Activated CD4-positive, alpha-beta T cell treated with anti-CD3 and anti-CD28 coated beads for 36 hours (primary cell): ENCODE measurements at regions of chr18 and their contacts with region 1.

Region 1: DNA sequence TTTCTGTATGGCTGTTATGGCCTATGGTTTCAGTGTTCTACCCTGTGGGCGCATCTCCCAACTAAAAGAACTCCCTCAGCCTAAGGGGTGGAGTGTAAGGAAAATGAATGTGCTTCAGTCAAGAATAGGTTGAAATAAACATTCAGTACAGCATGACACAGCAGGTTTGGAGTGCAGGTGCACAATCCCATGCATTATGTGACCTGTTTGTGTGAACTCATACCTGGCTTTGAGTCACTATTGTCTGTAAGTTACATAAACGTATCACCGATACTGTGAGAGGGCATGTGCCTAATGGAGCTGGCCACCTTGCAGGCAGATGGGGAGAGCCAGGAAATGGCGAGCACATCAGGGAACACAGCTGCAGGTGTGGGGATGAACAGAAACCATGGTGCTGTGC is 216.0 kb downstream of the DSEL start:
- DNase-seq: peak; percentile 45
- ATAC-seq: no peak
- H3K4me3 Mint-ChIP-seq: no peak overlapping the region
- H3K27ac Mint-ChIP-seq: no peak overlapping the region
- H3K4me1 Mint-ChIP-seq: peaks cover 6% of the 10 kb centered on the region
- H3K27me3 Mint-ChIP-seq: no peaks in the 10 kb centered on the region

Region 2: GRCh38 chr18:67239826-67240225 is 60.7 kb before region 1 on chr18:
- CTCF ChIA-PET with region 1: no interaction called
- POLR2A ChIA-PET with region 1: no interaction called
- intact Hi-C with region 1: no loop called
- DNase-seq: peak; percentile 22
- ATAC-seq: peak; percentile 44
- H3K4me3 Mint-ChIP-seq: no peak overlapping the region
- H3K27ac Mint-ChIP-seq: no peak overlapping the region
- H3K4me1 Mint-ChIP-seq: peaks cover 23% of the 10 kb centered on the region
- H3K27me3 Mint-ChIP-seq: no peaks in the 10 kb centered on the region

Region 3: GRCh38 chr18:67250776-67251424 is 49.6 kb before region 1 on chr18:
- CTCF ChIA-PET with region 1: no interaction called
- POLR2A ChIA-PET with region 1: no interaction called
- intact Hi-C with region 1: no loop called
- DNase-seq: no peak
- ATAC-seq: no peak
- H3K4me3 Mint-ChIP-seq: no peak overlapping the region
- H3K27ac Mint-ChIP-seq: no peak overlapping the region
- H3K4me1 Mint-ChIP-seq: no peaks in the 10 kb centered on the region
- H3K27me3 Mint-ChIP-seq: no peaks in the 10 kb centered on the region

Region 4: DNA sequence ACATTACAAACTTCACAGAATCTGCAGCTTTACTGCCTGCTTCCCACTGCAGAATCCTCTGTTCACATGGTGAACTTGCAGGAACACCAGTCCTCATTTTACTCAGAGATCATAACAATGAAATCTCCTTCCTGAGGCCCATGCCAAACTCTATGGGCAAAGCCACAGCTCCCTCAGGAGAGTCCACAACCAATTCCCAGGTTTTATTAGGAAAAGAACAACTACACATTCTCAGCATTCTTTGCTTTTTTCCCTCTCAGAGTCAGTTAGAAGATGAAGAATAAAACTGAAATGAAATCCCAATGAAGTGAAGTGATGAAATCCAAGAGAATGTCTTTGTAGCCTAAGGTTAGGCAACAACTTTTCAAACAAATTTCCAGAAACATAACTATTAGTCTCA is 17.7 kb before region 1 on chr18:
- CTCF ChIA-PET with region 1: interaction called, 3 read pairs
- POLR2A ChIA-PET with region 1: no interaction called
- intact Hi-C with region 1: loop called in 1 of 2 experiments (anchors 2 kb)
- DNase-seq: no peak
- ATAC-seq: no peak
- H3K4me3 Mint-ChIP-seq: no peak overlapping the region
- H3K27ac Mint-ChIP-seq: no peak overlapping the region
- H3K4me1 Mint-ChIP-seq: no peaks in the 10 kb centered on the region
- H3K27me3 Mint-ChIP-seq: no peaks in the 10 kb centered on the region

Region 5: GRCh38 chr18:67290421-67290820 is 10.1 kb before region 1 on chr18:
- CTCF ChIA-PET with region 1: interaction called, 3 read pairs
- POLR2A ChIA-PET with region 1: no interaction called
- intact Hi-C with region 1: loop called (anchors 1 kb)
- DNase-seq: no peak
- ATAC-seq: no peak
- H3K4me3 Mint-ChIP-seq: no peak overlapping the region
- H3K27ac Mint-ChIP-seq: no peak overlapping the region
- H3K4me1 Mint-ChIP-seq: no peaks in the 10 kb centered on the region
- H3K27me3 Mint-ChIP-seq: no peaks in the 10 kb centered on the region